ENCODE measurements at regions of chr11 and their contacts with region 1.

Region 1: GRCh38 chr11:110195845-110196754 is 100.3 kb downstream of the RDX start:
- DNase-seq: peak; percentile 57 to 99
- H3K4me3 ChIP-seq: no peak overlapping the region; the same call in 1 of the 2 replicates
- H3K27ac ChIP-seq: peak overlapping the region; percentile 91
- H3K4me1 ChIP-seq: peaks cover 82% of the 10 kb centered on the region
- H3K27me3 ChIP-seq: no peaks in the 10 kb centered on the region
- CTCF ChIP-seq: no peak

Region 2: DNA sequence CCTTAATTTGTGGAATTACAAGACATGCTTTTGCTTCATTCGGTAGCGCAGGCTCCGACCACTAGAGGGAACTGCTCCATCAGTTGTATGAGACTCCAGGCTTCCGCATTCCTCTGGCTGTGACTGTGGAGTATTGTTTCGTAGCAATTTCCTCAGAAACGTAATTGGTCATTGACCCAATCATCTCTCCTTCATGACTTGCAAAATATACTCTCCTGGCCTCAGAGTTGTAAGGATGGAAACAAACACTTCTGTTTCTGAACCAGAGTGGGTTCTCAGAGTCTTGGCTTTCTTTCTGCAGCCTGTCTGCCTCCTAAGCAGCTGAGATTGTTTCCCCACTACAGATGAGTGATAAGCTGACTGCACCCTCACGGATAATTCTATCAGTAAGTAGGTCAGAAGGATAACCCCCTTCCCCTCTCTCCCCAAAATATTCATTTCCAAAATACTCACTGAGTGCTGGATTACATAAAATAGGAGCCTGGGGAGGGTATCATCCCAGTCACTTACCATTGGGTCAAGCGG is 249.7 kb before region 1 on chr11:
- CTCF ChIA-PET with region 1: interaction called, 3 read pairs
- POLR2A ChIA-PET with region 1: no interaction called
- intact Hi-C with region 1: loop called (anchors 1 kb)
- DNase-seq: peak; percentile 85 to 97
- H3K4me3 ChIP-seq: peak overlapping the region; percentile 61
- H3K27ac ChIP-seq: peak overlapping the region; percentile 94
- H3K4me1 ChIP-seq: peaks cover 11% of the 10 kb centered on the region
- H3K27me3 ChIP-seq: no peaks in the 10 kb centered on the region
- CTCF ChIP-seq: peak; percentile 98

Region 3: GRCh38 chr11:110003426-110003825 is 192.7 kb before region 1 on chr11:
- CTCF ChIA-PET with region 1: no interaction called
- POLR2A ChIA-PET with region 1: no interaction called
- intact Hi-C with region 1: no loop called
- DNase-seq: no peak
- H3K4me3 ChIP-seq: no peak overlapping the region
- H3K27ac ChIP-seq: no peak overlapping the region
- H3K4me1 ChIP-seq: peaks cover 14% of the 10 kb centered on the region
- H3K27me3 ChIP-seq: no peaks in the 10 kb centered on the region
- CTCF ChIP-seq: no peak

Region 4: DNA sequence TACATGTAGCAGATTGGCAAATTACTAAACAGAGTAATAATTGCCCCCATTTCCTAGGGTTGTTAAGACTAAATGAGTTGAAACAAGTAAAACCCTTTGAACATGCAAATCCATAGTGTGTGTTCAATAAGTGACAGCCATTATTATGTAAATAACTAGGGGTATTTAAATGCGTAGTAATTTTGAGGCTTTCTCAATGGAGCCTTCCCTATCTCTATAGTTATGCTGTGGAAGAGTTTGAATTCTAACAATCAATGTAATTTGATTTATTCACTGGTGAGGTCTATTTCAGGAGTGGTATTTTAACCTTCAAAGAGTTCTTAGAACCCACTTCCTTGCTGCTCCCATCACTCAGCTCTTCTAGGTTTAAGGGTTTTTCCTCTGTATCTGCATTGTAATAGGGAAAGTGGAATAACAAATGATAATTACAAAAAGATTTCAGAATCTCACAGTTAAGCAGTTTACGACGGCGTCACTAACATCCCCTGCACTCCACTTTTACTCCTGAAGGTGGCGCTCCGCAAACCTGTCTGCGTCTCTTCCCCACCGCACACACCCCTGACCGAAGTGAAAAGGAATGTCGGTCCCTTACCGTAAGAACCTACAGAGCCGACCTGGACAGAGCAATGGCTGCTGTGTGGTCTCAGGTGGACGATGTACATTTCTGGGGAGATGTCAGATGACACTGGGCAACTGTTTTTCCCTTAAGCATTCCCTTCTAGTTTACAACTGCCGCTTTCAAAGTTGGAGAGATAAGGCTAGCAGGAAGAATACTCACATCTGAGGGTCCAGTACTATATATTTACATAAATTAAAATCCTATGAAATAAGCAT is 22.1 kb before region 1 on chr11:
- CTCF ChIA-PET with region 1: no interaction called
- POLR2A ChIA-PET with region 1: no interaction called
- intact Hi-C with region 1: loop called (anchors 2 kb)
- DNase-seq: peak in 1 of 2 experiments; percentile 62
- H3K4me3 ChIP-seq: no peak overlapping the region
- H3K27ac ChIP-seq: 0 out of 2 replicates have a peak overlapping the region, but pooled peaks have one; percentile 17
- H3K4me1 ChIP-seq: peaks cover 11% of the 10 kb centered on the region; the same call in 1 of the 2 replicates
- H3K27me3 ChIP-seq: no peaks in the 10 kb centered on the region
- CTCF ChIP-seq: peak; percentile 69

Region 5: GRCh38 chr11:110356756-110357671 is 160.9 kb after region 1 on chr11:
- CTCF ChIA-PET with region 1: no interaction called
- POLR2A ChIA-PET with region 1: no interaction called
- intact Hi-C with region 1: loop called (anchors 5 kb)
- DNase-seq: peak; percentile 59 to 99
- H3K4me3 ChIP-seq: no peak overlapping the region; the same call in 1 of the 2 replicates
- H3K27ac ChIP-seq: peak overlapping the region; percentile 84
- H3K4me1 ChIP-seq: peaks cover 32% of the 10 kb centered on the region
- H3K27me3 ChIP-seq: no peaks in the 10 kb centered on the region
- CTCF ChIP-seq: no peak

Region 6: GRCh38 chr11:110376711-110377324 is 180.7 kb after region 1 on chr11:
- CTCF ChIA-PET with region 1: no interaction called
- POLR2A ChIA-PET with region 1: no interaction called
- intact Hi-C with region 1: loop called (anchors 1 kb)
- DNase-seq: peak; percentile 68 to 72
- H3K4me3 ChIP-seq: no peak overlapping the region
- H3K27ac ChIP-seq: no peak overlapping the region
- H3K4me1 ChIP-seq: peaks cover 25% of the 10 kb centered on the region
- H3K27me3 ChIP-seq: no peaks in the 10 kb centered on the region
- CTCF ChIP-seq: peak; percentile 94